ENCODE measurements at regions of chr2 and their contacts with region 1.

Region 1: GRCh38 chr2:55771612-55772011 is 78.0 kb upstream of the PNPT1 start:
- DNase-seq: peak; percentile 56
- H3K4me3 Mint-ChIP-seq: no peak overlapping the region
- H3K27ac Mint-ChIP-seq: peak overlapping the region; percentile 35
- H3K4me1 Mint-ChIP-seq: peaks cover 51% of the 10 kb centered on the region
- H3K27me3 Mint-ChIP-seq: no peaks in the 10 kb centered on the region
- CTCF ChIP-seq: peak; percentile 66

Region 2: GRCh38 chr2:55050133-55050994 is 721.2 kb before region 1 on chr2 and contains the start of gene RTN4:
- CTCF ChIA-PET with region 1: no interaction called
- POLR2A ChIA-PET with region 1: no interaction called
- intact Hi-C with region 1: no loop called
- DNase-seq: peak; percentile 99
- H3K4me3 Mint-ChIP-seq: peak within 1 kb of the TSS; percentile 94
- H3K27ac Mint-ChIP-seq: peak within 1 kb of the TSS; percentile 99
- H3K4me1 Mint-ChIP-seq: peaks cover 24% of the 10 kb centered on the region
- H3K27me3 Mint-ChIP-seq: no peaks in the 10 kb centered on the region
- CTCF ChIP-seq: no peak
- total RNA-seq, gene RTN4: 389 and 391 TPM in 2 replicates

Region 3: GRCh38 chr2:55843096-55843993 is 71.7 kb after region 1 on chr2:
- CTCF ChIA-PET with region 1: interaction called, 9 read pairs
- POLR2A ChIA-PET with region 1: interaction called, 15 read pairs
- intact Hi-C with region 1: loop called (anchors 5 kb)
- DNase-seq: peak; percentile 64
- H3K4me3 Mint-ChIP-seq: no peak overlapping the region
- H3K27ac Mint-ChIP-seq: no peak overlapping the region
- H3K4me1 Mint-ChIP-seq: no peaks in the 10 kb centered on the region
- H3K27me3 Mint-ChIP-seq: no peaks in the 10 kb centered on the region
- CTCF ChIP-seq: no peak

Region 4: GRCh38 chr2:55862673-55863390 is 91.2 kb after region 1 on chr2:
- CTCF ChIA-PET with region 1: interaction called, 14 read pairs
- POLR2A ChIA-PET with region 1: interaction called, 28 read pairs
- intact Hi-C with region 1: loop called (anchors 1 kb)
- DNase-seq: peak; percentile 98
- H3K4me3 Mint-ChIP-seq: peak overlapping the region; percentile 47
- H3K27ac Mint-ChIP-seq: peak overlapping the region; percentile 93
- H3K4me1 Mint-ChIP-seq: peaks cover 26% of the 10 kb centered on the region
- H3K27me3 Mint-ChIP-seq: no peaks in the 10 kb centered on the region
- CTCF ChIP-seq: no peak

Region 5: DNA sequence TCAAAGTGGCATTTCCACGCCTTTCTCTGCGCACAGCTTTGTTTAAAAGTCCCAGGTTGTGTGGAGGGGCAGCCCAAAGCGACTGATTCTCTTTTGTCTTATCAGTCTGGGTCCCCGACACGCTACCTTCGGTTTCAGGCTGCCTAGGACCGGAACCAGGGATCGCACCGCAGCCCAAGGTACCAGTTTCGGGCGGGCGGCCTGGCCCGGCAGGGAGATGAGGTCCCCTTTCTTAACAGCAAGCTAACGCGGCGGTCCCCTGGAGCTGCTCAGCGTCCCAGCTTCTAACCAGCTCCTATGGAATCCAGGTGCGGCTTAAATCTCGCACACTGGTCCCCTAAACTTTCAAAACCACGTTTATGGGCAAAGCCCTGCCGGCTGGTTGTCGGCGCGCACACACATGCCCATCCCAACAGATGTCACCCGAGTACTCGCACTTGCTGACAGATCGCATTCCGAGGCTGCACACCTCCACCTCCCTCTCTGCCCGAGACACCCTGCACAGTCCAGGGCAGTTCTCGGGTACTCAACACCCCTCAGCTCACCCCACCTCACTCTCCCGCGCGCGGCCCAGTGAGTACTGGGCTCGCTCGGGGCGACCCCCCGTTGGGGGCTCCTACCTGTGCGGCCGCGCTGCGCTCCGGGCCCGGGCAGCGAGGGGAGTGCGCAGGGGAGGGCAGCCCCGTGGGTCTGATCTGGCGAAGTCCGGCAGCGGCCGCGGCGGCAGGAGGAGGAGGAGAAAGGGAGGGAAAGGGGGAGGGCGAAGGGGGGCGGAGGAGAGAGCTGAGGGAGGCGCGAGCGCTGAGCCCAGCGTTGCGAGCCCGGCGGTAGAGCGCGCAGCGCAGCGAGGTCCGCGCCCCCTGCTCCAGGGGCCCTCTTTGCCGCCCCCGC is 151.7 kb after region 1 on chr2 and contains the start of gene EFEMP1:
- CTCF ChIA-PET with region 1: interaction called, 15 read pairs
- POLR2A ChIA-PET with region 1: interaction called, 10 read pairs
- intact Hi-C with region 1: loop called (anchors 1 kb)
- DNase-seq: peak; percentile 83
- H3K4me3 Mint-ChIP-seq: peak within 1 kb of the TSS; percentile 87
- H3K27ac Mint-ChIP-seq: peak within 1 kb of the TSS; percentile 87
- H3K4me1 Mint-ChIP-seq: peaks cover 10% of the 10 kb centered on the region
- H3K27me3 Mint-ChIP-seq: no peaks in the 10 kb centered on the region
- CTCF ChIP-seq: no peak
- total RNA-seq, gene EFEMP1: 125 and 163 TPM in 2 replicates

Region 6: GRCh38 chr2:55961318-55961911 is 189.8 kb after region 1 on chr2:
- CTCF ChIA-PET with region 1: interaction called, 204 read pairs
- POLR2A ChIA-PET with region 1: interaction called, 26 read pairs
- intact Hi-C with region 1: loop called (anchors 1 kb)
- DNase-seq: peak; percentile 74
- H3K4me3 Mint-ChIP-seq: no peak overlapping the region
- H3K27ac Mint-ChIP-seq: peak overlapping the region; percentile 25
- H3K4me1 Mint-ChIP-seq: peaks cover 29% of the 10 kb centered on the region
- H3K27me3 Mint-ChIP-seq: no peaks in the 10 kb centered on the region
- CTCF ChIP-seq: peak; percentile 43

Region 7: DNA sequence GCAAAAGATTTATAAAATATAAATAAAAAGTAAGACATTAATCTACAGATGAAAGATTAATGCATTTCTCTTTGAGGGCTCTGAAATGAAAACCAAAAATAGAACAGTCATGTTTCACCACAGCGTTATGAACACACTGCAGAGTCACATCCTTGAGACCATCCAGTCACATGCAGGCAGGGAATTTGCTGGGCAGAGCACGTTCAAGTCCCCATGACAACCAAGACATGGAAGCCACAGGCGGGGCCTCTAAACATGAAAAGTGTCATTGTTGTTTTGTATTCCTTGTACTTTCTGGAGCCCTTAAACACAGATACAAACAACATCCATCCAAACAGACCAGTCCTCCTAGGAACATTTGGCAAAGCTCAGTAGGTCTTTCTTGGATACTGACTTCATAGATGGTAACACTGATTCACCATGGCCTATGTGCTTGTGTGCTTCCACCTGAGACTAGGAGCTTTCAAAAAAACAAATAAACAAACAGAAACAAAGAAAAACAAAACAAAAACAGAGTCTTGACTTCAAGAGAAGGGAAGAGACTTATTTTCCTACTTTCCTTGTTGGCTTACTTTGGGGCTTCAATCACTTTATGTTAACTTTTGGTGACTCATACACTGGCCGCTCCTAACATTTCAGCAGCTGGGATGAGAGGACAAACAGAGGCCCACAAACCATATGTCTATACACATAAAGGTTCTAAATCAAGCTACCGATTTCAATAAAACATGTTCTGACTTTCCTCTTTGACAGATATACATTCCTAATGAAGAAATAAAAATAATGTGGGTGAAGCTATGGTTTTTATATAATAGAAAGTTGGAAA is 312.7 kb after region 1 on chr2:
- CTCF ChIA-PET with region 1: no interaction called
- POLR2A ChIA-PET with region 1: no interaction called
- intact Hi-C with region 1: no loop called
- DNase-seq: no peak
- H3K4me3 Mint-ChIP-seq: no peak overlapping the region
- H3K27ac Mint-ChIP-seq: no peak overlapping the region
- H3K4me1 Mint-ChIP-seq: peaks cover 5% of the 10 kb centered on the region
- H3K27me3 Mint-ChIP-seq: no peaks in the 10 kb centered on the region
- CTCF ChIP-seq: no peak

Region 8: GRCh38 chr2:56132138-56132537 is 360.5 kb after region 1 on chr2:
- CTCF ChIA-PET with region 1: interaction called, 3 read pairs
- POLR2A ChIA-PET with region 1: no interaction called
- intact Hi-C with region 1: loop called (anchors 5 kb)
- DNase-seq: peak; percentile 66
- H3K4me3 Mint-ChIP-seq: no peak overlapping the region
- H3K27ac Mint-ChIP-seq: no peak overlapping the region
- H3K4me1 Mint-ChIP-seq: no peaks in the 10 kb centered on the region
- H3K27me3 Mint-ChIP-seq: no peaks in the 10 kb centered on the region
- CTCF ChIP-seq: peak; percentile 29

Measured in MCF 10A (cell line).